IMR-90 (cell line): ENCODE measurements at regions of chr2 and their contacts with region 1.

Region 1: DNA sequence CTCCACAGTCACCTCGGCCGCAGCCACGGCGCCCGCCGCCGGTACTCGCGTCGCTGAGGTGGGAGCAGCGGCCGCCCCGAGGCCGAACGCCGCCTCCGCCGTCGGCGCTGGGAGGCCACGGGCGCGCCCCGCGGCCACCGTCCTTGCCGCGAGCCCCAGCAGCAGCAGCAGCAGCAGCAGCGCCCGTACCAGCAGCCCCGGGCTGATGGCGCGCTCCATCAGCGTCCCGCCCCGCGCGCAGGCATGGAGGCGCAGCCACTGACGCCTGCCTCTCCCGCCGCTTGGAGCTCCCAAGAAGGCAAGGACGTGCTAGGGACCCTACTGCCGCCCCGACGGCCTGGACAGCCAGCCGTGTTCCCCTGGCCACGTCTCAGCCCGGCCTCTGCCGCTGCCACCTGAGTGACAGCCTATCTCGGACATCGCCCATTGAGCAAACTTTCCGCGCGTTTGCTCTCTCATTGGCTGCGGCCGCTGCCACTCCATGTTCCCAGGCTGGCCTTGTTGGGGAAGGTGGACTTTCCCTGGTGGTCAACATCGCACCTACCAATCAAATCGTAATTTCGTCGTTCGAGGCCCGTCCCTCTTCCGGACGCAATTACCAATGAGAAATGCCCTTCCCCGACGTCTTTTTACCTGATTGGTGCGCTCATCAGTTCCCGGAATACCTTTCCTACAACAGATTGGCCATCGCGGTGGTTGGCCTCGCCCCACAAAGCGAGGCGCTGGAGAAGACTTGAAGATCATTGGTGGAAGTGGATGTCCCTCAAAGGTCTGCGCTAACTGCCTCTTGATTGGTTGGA is at the start of gene EIF2AK3:
- DNase-seq: peak; percentile 100
- ATAC-seq: peak; percentile 91
- H3K4me3 ChIP-seq: peak within 1 kb of the TSS; percentile 70
- H3K27ac ChIP-seq: peak within 1 kb of the TSS; percentile 94
- H3K4me1 ChIP-seq: peaks cover 4% of the 10 kb centered on the region
- H3K27me3 ChIP-seq: no peaks in the 10 kb centered on the region
- CTCF ChIP-seq: 0 out of 2 replicates have a peak, but pooled peaks have one; percentile 7
- POLR2A ChIP-seq: peak; percentile 88
- RAD21 ChIP-seq: no peak
- total RNA-seq, gene EIF2AK3: 20.3 and 22.8 TPM in 2 replicates

Region 2: GRCh38 chr2:88561646-88562388 is 65.4 kb before region 1 on chr2:
- CTCF ChIA-PET with region 1: no interaction called
- POLR2A ChIA-PET with region 1: no interaction called
- dilution Hi-C with region 1: no loop called
- in situ Hi-C with region 1: no loop called
- intact Hi-C with region 1: loop called (anchors 10 kb)
- DNase-seq: no peak
- ATAC-seq: no peak
- H3K4me3 ChIP-seq: no peak overlapping the region
- H3K27ac ChIP-seq: no peak overlapping the region
- H3K4me1 ChIP-seq: no peaks in the 10 kb centered on the region; the same call in 1 of the 2 replicates
- H3K27me3 ChIP-seq: no peaks in the 10 kb centered on the region
- CTCF ChIP-seq: no peak
- POLR2A ChIP-seq: no peak
- RAD21 ChIP-seq: no peak

Region 3: DNA sequence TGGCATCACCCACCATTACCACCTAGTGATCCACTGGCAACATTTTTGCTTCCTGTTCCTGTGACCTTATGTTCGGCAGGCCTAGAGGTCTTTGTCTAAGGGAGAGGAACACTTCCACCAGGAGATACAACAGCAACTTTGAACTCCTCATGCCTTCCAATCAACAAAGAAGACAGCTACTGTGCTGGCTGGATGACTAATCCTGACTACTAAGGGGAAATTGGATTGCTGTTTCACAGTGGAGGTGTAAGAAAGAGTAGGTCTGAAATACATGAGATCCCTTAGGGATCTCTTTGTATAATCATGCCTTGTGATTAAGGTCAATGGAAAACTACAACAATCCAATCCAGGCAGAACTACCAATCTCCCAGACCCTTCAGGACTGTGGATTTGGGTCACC is 45.2 kb before region 1 on chr2:
- CTCF ChIA-PET with region 1: no interaction called
- POLR2A ChIA-PET with region 1: no interaction called
- dilution Hi-C with region 1: no loop called
- in situ Hi-C with region 1: no loop called
- intact Hi-C with region 1: loop called (anchors 2 kb)
- DNase-seq: peak; percentile 28
- ATAC-seq: no peak
- H3K4me3 ChIP-seq: no peak overlapping the region
- H3K27ac ChIP-seq: no peak overlapping the region
- H3K4me1 ChIP-seq: no peaks in the 10 kb centered on the region
- H3K27me3 ChIP-seq: no peaks in the 10 kb centered on the region
- CTCF ChIP-seq: no peak
- POLR2A ChIP-seq: no peak
- RAD21 ChIP-seq: no peak

Region 4: DNA sequence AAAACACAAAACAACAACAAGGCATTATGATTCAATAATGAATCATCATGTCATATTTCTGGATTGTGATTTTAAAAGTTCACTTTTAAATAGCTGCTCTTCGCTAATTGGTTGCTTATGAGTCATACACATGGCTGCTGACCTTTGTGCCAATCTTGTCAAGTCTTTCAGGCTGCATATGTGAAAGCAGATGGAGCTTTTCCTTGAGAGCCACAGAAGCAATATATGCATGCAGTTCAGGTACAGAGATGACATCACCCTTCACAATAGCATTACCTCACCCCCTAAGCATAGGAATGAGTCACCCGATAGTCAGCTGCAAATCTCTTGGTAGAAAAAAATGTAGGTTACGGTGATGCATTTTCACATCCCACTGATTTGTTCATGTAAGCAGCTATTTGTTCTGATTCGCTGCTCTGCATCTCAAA is 27.2 kb before region 1 on chr2:
- CTCF ChIA-PET with region 1: no interaction called
- POLR2A ChIA-PET with region 1: no interaction called
- dilution Hi-C with region 1: no loop called
- in situ Hi-C with region 1: no loop called
- intact Hi-C with region 1: loop called (anchors 1 kb)
- DNase-seq: peak; percentile 99
- ATAC-seq: peak; percentile 80
- H3K4me3 ChIP-seq: no peak overlapping the region
- H3K27ac ChIP-seq: no peak overlapping the region
- H3K4me1 ChIP-seq: peaks cover 9% of the 10 kb centered on the region
- H3K27me3 ChIP-seq: no peaks in the 10 kb centered on the region
- CTCF ChIP-seq: no peak
- POLR2A ChIP-seq: no peak
- RAD21 ChIP-seq: no peak

Region 5: DNA sequence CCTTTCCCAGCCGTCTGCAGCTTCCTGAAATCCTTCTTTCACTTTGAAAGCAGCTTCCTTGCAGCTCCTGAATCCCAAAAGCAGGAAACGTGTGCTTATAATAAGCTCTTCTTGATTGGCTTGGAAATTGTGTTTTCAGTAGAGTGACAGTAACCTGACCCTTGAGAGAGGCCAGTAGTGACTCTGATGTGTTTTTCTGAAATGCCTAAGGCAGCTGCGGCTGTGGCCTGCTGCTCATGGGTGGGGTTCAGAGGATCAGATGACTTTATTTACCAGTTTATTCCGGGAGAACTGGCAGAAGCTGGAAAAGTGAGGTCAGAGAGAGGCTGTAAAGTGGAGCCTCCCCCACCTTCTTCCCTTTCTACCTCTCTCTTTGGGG is 32.3 kb after region 1 on chr2:
- CTCF ChIA-PET with region 1: interaction called, 3 read pairs
- POLR2A ChIA-PET with region 1: no interaction called
- dilution Hi-C with region 1: no loop called
- in situ Hi-C with region 1: no loop called
- intact Hi-C with region 1: loop called (anchors 2 kb)
- DNase-seq: peak; percentile 71
- ATAC-seq: peak; percentile 65
- H3K4me3 ChIP-seq: peak overlapping the region; percentile 2; the same call in 1 of the 2 replicates
- H3K27ac ChIP-seq: peak overlapping the region; percentile 95; the same call in 1 of the 2 replicates
- H3K4me1 ChIP-seq: peaks cover 10% of the 10 kb centered on the region
- H3K27me3 ChIP-seq: no peaks in the 10 kb centered on the region
- CTCF ChIP-seq: no peak
- POLR2A ChIP-seq: no peak
- RAD21 ChIP-seq: no peak

Region 6: DNA sequence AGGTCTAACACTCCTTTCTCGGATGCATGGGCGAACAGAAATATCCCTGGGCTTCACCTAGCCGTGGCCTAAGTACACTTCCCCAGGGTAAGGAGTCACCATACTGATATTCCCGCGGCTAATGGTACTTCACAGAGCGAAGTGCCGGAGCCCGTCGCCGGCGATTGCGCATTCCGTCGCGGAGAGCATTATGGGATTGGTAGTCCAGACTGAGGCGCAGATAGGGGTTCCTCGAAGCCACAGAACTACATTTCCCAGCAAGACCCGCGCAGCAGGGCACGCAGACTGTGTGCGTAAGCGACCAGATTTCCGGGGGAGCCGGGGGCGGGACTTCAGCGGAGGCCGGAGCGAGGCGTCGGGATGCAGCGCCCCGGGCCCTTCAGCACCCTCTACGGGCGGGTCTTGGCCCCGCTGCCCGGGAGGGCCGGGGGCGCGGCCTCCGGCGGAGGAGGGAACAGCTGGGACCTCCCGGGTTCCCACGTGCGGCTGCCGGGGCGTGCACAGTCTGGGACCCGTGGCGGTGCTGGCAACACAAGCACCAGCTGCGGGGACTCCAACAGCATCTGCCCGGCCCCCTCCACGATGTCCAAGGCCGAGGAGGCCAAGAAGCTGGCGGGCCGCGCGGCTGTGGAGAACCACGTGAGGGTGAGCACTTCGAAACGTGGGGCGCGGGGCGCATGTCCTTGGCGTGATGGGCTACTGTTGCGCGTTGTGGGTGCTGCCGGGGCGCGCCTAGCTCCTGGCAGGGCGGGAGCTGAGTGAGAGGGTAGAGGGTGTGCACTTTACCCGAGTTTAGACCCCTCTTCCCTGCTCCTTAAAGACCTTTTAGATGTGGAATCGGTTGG is 64.3 kb after region 1 on chr2 and contains the start of gene RPIA:
- CTCF ChIA-PET with region 1: no interaction called
- POLR2A ChIA-PET with region 1: no interaction called
- dilution Hi-C with region 1: no loop called
- in situ Hi-C with region 1: no loop called
- intact Hi-C with region 1: loop called (anchors 1 kb)
- DNase-seq: peak; percentile 98
- ATAC-seq: peak; percentile 98
- H3K4me3 ChIP-seq: peak within 1 kb of the TSS; percentile 81
- H3K27ac ChIP-seq: peak within 1 kb of the TSS; percentile 64
- H3K4me1 ChIP-seq: no peaks in the 10 kb centered on the region
- H3K27me3 ChIP-seq: no peaks in the 10 kb centered on the region
- CTCF ChIP-seq: peak; percentile 82
- POLR2A ChIP-seq: peak; percentile 75
- RAD21 ChIP-seq: no peak; the same call in 1 of the 2 replicates
- total RNA-seq, gene RPIA: 4.1 and 4.7 TPM in 2 replicates

Region 7: DNA sequence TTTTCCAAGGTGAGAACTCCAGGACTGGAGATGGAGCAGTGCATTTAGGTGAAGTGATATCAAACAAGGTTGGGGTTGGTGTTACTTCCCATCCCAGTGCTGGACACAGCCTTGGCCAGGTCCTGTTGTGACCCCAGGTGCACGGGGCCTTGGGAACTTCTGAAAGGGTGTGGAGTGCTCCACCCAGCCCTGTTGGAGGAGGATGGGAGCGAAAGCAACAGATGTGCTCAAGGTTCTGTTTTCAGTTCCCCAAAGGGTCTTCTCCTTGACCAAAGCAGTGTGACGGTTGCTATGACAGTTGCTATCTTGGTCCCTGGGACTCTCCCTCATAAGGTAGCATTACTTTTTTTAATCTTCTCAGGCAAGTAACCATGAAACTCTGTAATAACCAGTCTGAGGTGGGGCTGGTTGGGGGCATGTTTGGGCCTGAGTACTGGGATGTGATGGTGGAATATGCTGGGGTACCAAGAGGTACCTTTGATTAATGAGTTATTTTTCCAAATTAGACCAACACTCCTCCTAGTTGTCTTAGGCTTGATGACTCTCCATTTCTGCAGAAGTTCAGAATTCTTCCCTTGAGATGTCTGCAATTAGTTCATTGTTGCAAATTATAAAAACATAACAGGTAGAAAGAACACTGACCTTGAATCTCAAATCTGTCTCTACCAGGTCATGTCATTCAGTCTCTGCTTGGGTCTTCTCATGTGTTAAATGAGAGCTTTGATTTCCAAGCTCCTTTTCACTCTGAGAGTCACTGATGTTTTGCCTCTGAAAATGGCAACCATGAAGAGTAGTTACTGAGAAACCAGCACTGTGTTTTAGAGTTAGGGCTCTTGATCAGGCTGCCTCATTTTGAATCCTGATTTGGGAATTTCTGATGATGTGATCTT is 218.8 kb after region 1 on chr2:
- CTCF ChIA-PET with region 1: no interaction called
- POLR2A ChIA-PET with region 1: no interaction called
- dilution Hi-C with region 1: no loop called
- in situ Hi-C with region 1: no loop called
- intact Hi-C with region 1: no loop called
- DNase-seq: no peak
- ATAC-seq: no peak
- H3K4me3 ChIP-seq: no peak overlapping the region
- H3K27ac ChIP-seq: no peak overlapping the region
- H3K4me1 ChIP-seq: no peaks in the 10 kb centered on the region
- H3K27me3 ChIP-seq: no peaks in the 10 kb centered on the region
- CTCF ChIP-seq: no peak
- POLR2A ChIP-seq: no peak
- RAD21 ChIP-seq: no peak